Natural killer cell (primary cell): ENCODE measurements at regions of chr20 and their contacts with region 1.

Region 1: GRCh38 chr20:46681032-46681854 is 8.0 kb downstream of the TP53RK start:
- DNase-seq: peak; percentile 49 to 81
- ATAC-seq: peak in 2 of 3 donors; percentile 70 to 76
- H3K4me3 ChIP-seq: no peak overlapping the region
- H3K4me3 Mint-ChIP-seq: no peak overlapping the region
- H3K27ac ChIP-seq: no peak overlapping the region
- H3K27ac Mint-ChIP-seq: peak overlapping the region in 1 of 2 donors; percentile 20
- H3K4me1 ChIP-seq: peaks cover 6% of the 10 kb centered on the region
- H3K4me1 Mint-ChIP-seq: peaks cover 50% of the 10 kb centered on the region in 2 donors
- H3K27me3 ChIP-seq: no peaks in the 10 kb centered on the region
- H3K27me3 Mint-ChIP-seq: no peaks in the 10 kb centered on the region
- CTCF ChIP-seq: peak; percentile 76

Region 2: GRCh38 chr20:45850926-45851325 is 830.3 kb before region 1 on chr20:
- intact Hi-C with region 1: no loop called
- DNase-seq: no peak
- ATAC-seq: no peak
- H3K4me3 ChIP-seq: no peak overlapping the region
- H3K4me3 Mint-ChIP-seq: no peak overlapping the region
- H3K27ac ChIP-seq: no peak overlapping the region
- H3K27ac Mint-ChIP-seq: no peak overlapping the region
- H3K4me1 ChIP-seq: peaks cover 11% of the 10 kb centered on the region
- H3K4me1 Mint-ChIP-seq: peaks cover 11 to 21% of the 10 kb centered on the region in 2 donors
- H3K27me3 ChIP-seq: no peaks in the 10 kb centered on the region
- H3K27me3 Mint-ChIP-seq: no peaks in the 10 kb centered on the region
- CTCF ChIP-seq: no peak

Region 3: GRCh38 chr20:46132705-46133120 is 548.5 kb before region 1 on chr20:
- intact Hi-C with region 1: loop called (anchors 5 kb)
- DNase-seq: peak; percentile 34 to 72
- ATAC-seq: peak; percentile 70 to 86 (median 77)
- H3K4me3 ChIP-seq: no peak overlapping the region
- H3K4me3 Mint-ChIP-seq: no peak overlapping the region
- H3K27ac ChIP-seq: no peak overlapping the region
- H3K27ac Mint-ChIP-seq: no peak overlapping the region
- H3K4me1 ChIP-seq: peaks cover 5% of the 10 kb centered on the region
- H3K4me1 Mint-ChIP-seq: peaks cover 0 to 7% of the 10 kb centered on the region in 2 donors
- H3K27me3 ChIP-seq: peaks cover 2% of the 10 kb centered on the region
- H3K27me3 Mint-ChIP-seq: peaks cover 13 to 19% of the 10 kb centered on the region in 2 donors
- CTCF ChIP-seq: peak; percentile 50

Region 4: DNA sequence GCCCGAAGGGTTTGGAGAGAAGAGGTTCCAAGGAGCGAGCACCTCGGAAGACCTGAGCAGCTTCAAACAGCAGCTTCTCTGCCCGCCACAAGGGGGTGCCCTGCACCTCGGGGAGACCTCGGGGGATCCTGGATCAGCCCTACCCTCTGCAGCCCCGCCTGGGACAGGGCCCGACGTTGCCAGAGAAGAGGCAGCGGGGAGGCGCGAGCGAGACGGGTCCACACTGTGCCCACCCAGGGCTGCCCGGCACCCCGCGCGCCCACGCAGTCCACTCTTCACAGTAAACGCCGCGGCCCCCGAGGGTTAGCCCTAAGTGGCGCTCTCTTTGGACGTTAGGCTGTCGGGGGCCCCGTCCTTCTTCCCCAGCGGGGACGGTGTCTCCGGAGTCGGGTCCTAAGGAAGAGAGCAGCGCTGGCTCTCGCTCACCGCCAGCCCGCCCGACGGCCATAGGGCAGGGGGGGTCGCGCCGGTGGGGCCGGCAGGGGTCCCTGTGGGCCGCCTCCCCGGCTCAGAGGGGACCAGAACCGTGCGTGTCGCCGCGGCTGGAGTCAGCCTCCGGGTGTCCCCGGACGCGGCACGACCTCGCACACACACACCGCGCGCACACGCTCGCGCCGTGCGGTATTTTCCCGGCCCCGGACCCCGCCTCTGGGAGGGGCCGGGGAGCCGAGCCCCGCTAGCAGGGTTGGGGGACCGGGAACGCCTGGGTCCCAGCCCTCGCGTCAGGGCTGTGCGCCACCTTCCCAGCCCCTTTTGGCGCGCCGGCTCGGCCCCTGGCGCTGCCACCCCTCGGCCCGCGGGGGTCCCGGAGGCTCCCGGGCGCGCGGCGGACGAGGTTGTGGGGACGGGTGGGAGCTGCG is 373.9 kb before region 1 on chr20:
- intact Hi-C with region 1: loop called (anchors 2 kb)
- DNase-seq: peak; percentile 49 to 87
- ATAC-seq: peak; percentile 80 to 90 (median 85)
- H3K4me3 ChIP-seq: no peak overlapping the region
- H3K4me3 Mint-ChIP-seq: peak overlapping the region; percentile 73
- H3K27ac ChIP-seq: no peak overlapping the region
- H3K27ac Mint-ChIP-seq: no peak overlapping the region
- H3K4me1 ChIP-seq: peaks cover 12% of the 10 kb centered on the region
- H3K4me1 Mint-ChIP-seq: peaks cover 0 to 21% of the 10 kb centered on the region in 2 donors
- H3K27me3 ChIP-seq: peaks cover 33% of the 10 kb centered on the region
- H3K27me3 Mint-ChIP-seq: peaks cover 52 to 76% of the 10 kb centered on the region in 2 donors
- CTCF ChIP-seq: peak; percentile 79

Region 5: DNA sequence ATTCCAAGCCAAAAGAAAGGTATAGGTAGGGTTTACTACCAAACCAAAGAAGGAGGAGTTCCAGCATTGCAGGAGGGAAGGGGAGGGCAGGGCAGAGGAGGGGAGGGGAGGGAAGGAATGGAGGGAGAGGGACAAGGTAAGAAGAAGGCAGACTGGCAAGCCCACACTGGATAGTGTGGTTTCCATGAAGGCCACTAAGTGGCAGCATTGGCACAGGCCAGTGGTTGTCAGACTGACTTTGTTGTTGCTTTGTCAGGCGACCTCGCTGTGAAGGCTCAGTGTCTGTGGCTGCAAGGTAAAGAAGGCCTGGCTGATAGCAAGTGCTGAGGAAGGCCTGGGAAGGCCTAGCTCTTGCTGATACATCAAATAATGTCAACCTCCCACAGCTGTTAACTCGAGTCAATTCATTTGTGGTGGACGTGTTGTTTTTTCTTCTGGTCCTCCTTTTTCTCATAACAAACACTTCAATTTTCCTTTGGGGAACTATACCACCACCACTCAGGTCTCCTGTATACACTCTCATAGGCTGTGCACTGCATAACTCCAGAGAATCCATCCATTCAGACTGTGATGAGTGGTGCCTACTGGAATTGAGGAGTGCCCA is 160.2 kb before region 1 on chr20:
- intact Hi-C with region 1: loop called (anchors 1 kb)
- DNase-seq: peak; percentile 26 to 64
- ATAC-seq: peak; percentile 64 to 88 (median 66)
- H3K4me3 ChIP-seq: no peak overlapping the region
- H3K4me3 Mint-ChIP-seq: no peak overlapping the region
- H3K27ac ChIP-seq: no peak overlapping the region
- H3K27ac Mint-ChIP-seq: no peak overlapping the region
- H3K4me1 ChIP-seq: no peaks in the 10 kb centered on the region
- H3K4me1 Mint-ChIP-seq: no peaks in the 10 kb centered on the region
- H3K27me3 ChIP-seq: no peaks in the 10 kb centered on the region
- H3K27me3 Mint-ChIP-seq: peaks cover 10 to 20% of the 10 kb centered on the region in 2 donors
- CTCF ChIP-seq: peak; percentile 53

Region 6: GRCh38 chr20:46562373-46563169 is 118.7 kb before region 1 on chr20:
- intact Hi-C with region 1: loop called (anchors 5 kb)
- DNase-seq: peak; percentile 39 to 70
- ATAC-seq: peak; percentile 78 to 98 (median 93)
- H3K4me3 ChIP-seq: no peak overlapping the region
- H3K4me3 Mint-ChIP-seq: no peak overlapping the region
- H3K27ac ChIP-seq: no peak overlapping the region
- H3K27ac Mint-ChIP-seq: no peak overlapping the region
- H3K4me1 ChIP-seq: peaks cover 9% of the 10 kb centered on the region
- H3K4me1 Mint-ChIP-seq: peaks cover 0 to 12% of the 10 kb centered on the region in 2 donors
- H3K27me3 ChIP-seq: no peaks in the 10 kb centered on the region
- H3K27me3 Mint-ChIP-seq: peaks cover 2 to 3% of the 10 kb centered on the region in 2 donors
- CTCF ChIP-seq: peak; percentile 91

Region 7: GRCh38 chr20:46939031-46939965 is 258.1 kb after region 1 on chr20:
- intact Hi-C with region 1: no loop called
- DNase-seq: no peak
- ATAC-seq: no peak
- H3K4me3 ChIP-seq: no peak overlapping the region
- H3K4me3 Mint-ChIP-seq: no peak overlapping the region
- H3K27ac ChIP-seq: no peak overlapping the region
- H3K27ac Mint-ChIP-seq: no peak overlapping the region
- H3K4me1 ChIP-seq: no peaks in the 10 kb centered on the region
- H3K4me1 Mint-ChIP-seq: no peaks in the 10 kb centered on the region
- H3K27me3 ChIP-seq: no peaks in the 10 kb centered on the region
- H3K27me3 Mint-ChIP-seq: peaks cover 4 to 11% of the 10 kb centered on the region in 2 donors
- CTCF ChIP-seq: no peak